ENCODE measurements at regions of chr15 and their contacts with region 1.

Region 1: DNA sequence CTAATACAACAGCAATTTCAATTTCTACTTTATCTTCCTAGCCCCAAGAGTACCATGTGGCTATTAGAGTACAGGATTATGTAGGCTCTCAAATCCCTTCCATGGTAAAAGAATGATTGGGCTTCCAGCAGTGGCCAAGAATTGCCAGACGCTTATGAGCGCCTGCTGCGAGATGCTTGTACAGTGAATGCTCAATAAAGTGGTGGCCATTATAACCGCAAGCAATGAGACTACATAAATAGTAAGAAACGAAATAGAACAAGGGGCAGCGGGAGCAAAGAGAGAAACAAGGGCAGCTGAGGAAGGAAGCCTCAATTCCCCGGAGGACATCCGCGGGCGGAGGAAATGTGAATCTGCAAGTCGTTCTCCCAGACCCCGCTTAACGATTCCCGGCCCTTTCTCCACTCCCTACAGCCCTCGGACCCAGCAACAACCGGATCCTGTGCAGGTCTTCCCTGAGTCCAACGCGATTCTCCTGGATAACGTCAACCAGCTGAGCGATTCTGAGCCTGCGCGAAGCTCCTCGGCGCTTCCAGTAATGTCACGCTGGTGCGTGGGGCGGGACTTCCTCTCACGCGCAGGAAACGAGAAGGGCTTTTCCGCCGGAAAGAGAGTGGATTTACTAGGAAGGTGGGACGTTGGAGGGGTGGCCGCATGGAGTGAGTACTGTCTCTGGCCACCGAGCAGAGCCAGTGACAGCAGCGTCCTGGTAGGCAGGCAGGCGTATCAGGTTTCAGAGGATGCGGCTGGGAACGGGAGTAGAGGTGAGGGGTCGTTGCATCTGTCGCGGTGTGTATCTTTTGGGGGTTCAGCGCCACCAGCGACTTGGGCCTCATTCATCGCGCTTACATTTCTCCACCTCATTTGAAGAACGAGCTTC is 40.5 kb upstream of the AP3B2 start:
- DNase-seq: peak; percentile 92
- H3K4me3 ChIP-seq: peak overlapping the region; percentile 90
- H3K27ac ChIP-seq: peak overlapping the region; percentile 75
- H3K4me1 ChIP-seq: peaks cover 36% of the 10 kb centered on the region
- CTCF ChIP-seq: no peak

Region 2: GRCh38 chr15:82540055-82540983 is 209.9 kb before region 1 on chr15 and contains the start of gene RPS17:
- CTCF ChIA-PET with region 1: interaction called, 3 read pairs
- POLR2A ChIA-PET with region 1: interaction called, 11 read pairs
- intact Hi-C with region 1: loop called (anchors 5 kb)
- DNase-seq: peak; percentile 96
- H3K4me3 ChIP-seq: peak within 1 kb of the TSS; percentile 78
- H3K27ac ChIP-seq: peak within 1 kb of the TSS; percentile 66
- H3K4me1 ChIP-seq: peaks cover 29% of the 10 kb centered on the region
- CTCF ChIP-seq: peak; percentile 90
- total RNA-seq, gene RPS17: 3,737 and 4,080 TPM in 2 replicates

Region 3: GRCh38 chr15:82803793-82804574 is 53.8 kb after region 1 on chr15:
- CTCF ChIA-PET with region 1: no interaction called
- POLR2A ChIA-PET with region 1: interaction called, 10 read pairs
- intact Hi-C with region 1: loop called (anchors 1 kb)
- DNase-seq: no peak
- H3K4me3 ChIP-seq: no peak overlapping the region
- H3K27ac ChIP-seq: no peak overlapping the region
- H3K4me1 ChIP-seq: peaks cover 58% of the 10 kb centered on the region
- CTCF ChIP-seq: no peak

Region 4: DNA sequence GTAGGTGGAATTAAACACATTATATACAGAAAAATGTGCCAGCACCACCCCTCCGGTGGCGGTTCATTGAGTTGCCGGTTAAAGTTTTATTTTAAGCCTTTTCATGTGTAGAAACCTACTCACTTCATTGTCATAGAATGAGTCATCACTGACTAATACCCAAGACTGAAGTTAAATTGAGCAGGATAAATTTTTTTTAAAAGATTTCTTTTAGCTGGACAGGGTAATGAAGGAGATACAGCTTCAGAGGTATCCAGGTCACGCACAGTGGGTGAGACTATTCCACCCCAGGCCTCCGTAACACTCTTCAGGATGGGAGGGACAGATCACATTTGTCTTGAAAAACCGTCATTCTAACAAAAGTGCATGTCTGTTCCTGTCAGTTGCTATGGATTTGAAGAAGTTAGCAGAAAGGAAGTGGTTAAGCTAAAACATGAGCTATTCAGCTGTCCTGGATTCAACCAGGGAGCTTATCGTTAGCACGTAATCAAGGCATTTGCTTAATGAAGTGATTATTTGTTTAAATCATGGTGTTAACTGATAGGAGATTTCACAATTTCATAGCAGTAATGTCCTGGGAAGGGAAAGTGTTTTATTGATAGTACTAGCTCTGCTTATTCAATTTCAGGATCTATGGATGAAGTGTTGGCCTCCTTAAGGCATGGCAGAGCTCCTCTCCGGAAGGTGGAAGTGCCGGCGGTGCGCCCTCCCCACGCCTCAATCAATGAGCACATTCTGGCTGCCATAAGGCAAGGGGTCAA is 82.6 kb after region 1 on chr15:
- CTCF ChIA-PET with region 1: no interaction called
- POLR2A ChIA-PET with region 1: no interaction called
- intact Hi-C with region 1: loop called (anchors 5 kb)
- DNase-seq: no peak
- H3K4me3 ChIP-seq: no peak overlapping the region
- H3K27ac ChIP-seq: no peak overlapping the region
- H3K4me1 ChIP-seq: no peaks in the 10 kb centered on the region
- CTCF ChIP-seq: no peak

Region 5: DNA sequence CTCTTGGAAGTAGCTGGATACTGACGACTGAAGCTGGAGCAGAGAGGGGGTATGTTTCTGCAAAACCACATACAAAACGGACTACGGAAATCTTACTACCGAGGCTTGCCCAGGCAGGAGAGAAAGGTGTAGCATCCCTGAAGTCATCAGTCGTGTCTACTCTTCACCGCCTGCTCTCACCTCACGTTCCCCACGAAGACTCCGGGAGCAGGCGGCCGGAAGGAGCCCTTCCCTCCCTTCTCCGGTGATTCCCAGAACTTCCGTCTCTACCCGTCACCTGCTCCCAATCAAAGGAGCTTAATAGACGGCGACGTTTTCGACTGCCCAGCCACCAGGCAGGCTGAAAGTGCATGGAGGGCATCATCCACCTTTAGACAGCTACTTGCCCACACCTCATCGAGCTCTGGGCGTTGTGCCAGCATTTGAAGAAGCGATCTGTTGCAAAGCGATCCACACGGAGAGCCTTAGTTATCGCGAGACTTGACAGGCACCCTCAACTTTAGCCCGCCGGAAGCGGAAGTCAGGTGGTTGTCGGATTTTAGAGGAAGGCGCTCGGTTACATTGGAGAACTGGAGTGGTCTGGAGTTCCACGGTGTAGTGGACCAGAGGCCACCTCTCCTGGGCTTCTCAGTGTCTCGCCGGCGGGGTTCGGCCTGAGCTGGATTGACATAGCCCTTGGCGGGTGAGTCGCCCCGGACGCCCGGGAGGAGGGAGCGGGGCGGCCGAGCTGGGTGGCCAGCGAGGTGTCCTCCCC is 235.7 kb after region 1 on chr15 and contains the start of gene RAMAC:
- CTCF ChIA-PET with region 1: no interaction called
- POLR2A ChIA-PET with region 1: interaction called, 12 read pairs
- intact Hi-C with region 1: no loop called
- DNase-seq: peak; percentile 98
- H3K4me3 ChIP-seq: peak within 1 kb of the TSS; percentile 95
- H3K27ac ChIP-seq: peak within 1 kb of the TSS; percentile 46
- H3K4me1 ChIP-seq: peaks cover 13% of the 10 kb centered on the region
- CTCF ChIP-seq: no peak
- total RNA-seq, gene RAMAC: 28.1 and 39.0 TPM in 2 replicates

Region 6: DNA sequence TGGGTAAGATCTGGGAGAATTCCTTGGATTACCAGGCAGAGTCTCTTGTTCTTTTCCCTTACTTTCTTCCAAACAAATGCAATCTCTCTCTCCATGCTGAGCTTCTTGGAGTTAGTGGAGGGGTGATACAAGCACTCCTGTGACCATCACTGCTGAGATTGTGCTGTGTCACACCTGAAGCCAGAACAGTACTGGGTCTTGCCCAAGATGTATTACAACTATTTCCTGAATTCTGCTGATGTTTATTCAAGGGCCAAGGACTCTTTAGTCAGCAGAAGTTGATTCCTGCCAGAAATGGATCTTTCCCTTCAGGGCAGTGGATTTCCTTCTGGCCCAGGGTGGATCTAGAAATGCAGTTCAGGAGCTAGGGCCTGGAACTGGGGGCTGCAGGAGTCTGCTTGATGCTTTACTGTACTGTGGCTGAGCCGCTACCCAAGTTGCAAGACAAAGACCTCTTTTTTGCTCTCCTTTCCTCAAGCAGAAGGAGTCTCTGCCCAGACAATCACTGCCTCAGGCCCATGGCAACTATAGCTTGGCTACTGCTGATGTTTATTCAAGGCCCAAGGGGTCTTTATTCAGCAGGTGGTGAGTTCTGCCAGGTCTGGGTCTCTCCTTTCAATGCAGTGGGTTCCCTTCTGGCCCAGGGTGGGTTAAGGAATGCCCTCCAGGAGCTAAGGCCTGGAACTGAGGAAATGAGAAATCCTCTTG is 795.8 kb after region 1 on chr15:
- CTCF ChIA-PET with region 1: no interaction called
- POLR2A ChIA-PET with region 1: no interaction called
- intact Hi-C with region 1: no loop called
- DNase-seq: no peak
- H3K4me3 ChIP-seq: no peak overlapping the region
- H3K27ac ChIP-seq: no peak overlapping the region
- H3K4me1 ChIP-seq: no peaks in the 10 kb centered on the region
- CTCF ChIP-seq: no peak

Measured in OCI-LY7 (cell line).